ENCODE measurements at regions of chr3 and their contacts with region 1.

Region 1: DNA sequence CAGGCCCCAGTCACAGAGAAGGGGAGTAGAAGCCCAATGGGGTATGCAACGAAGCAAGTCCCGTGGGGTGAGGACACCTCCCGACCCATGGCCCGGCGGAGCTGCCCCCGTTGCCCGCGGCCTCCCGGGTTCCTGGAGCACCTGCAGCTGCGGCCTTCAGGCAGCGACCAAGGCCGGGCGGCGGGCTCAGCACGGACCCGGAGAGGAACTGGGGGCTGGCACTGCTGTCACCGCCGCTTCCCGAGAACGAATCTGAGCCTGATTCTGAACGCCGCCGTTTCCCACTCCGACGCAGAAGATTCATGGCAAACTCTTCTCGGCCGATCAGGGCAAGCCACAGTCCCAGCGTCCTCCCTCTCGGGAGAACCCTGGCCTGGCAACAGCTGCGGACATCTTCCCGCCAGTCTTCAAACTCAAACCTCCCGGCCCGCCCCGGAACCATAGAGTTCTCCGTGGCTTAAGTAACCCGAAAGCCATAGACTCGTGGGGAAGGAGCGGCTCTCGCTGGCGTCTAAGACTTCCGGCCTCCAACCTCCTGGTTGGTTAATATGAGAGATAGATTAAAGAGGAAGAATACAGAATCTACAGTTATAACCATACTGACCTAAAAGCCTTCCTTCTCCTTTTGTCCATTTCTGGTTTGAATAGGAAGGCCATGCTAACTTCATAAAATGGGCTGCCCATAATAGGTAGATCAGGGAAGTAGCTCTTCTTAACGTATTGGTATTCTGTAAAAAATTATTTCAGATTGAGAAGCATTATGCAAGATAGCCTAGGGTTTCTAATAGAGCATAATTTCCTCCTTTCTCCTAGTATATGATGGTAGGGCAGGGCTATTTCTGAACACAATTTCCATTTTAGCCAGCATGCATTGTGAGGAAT is at the start of gene POLQ:
- DNase-seq: peak; percentile 64 to 89 (median 82)
- ATAC-seq: peak; percentile 99
- H3K4me3 ChIP-seq: peak within 1 kb of the TSS; percentile 81
- H3K4me3 Mint-ChIP-seq: peak within 1 kb of the TSS; percentile 87 to 95 (median 92)
- H3K27ac ChIP-seq: peak within 1 kb of the TSS; percentile 70
- H3K27ac Mint-ChIP-seq: peak within 1 kb of the TSS; percentile 84 to 97 (median 94)
- H3K4me1 ChIP-seq: peaks cover 0 to 5% of the 10 kb centered on the region in 2 donors
- H3K4me1 Mint-ChIP-seq: peaks cover 6 to 38% (median 10%) of the 10 kb centered on the region in 7 donors
- H3K27me3 ChIP-seq: no peaks in the 10 kb centered on the region
- H3K27me3 Mint-ChIP-seq: no peaks in the 10 kb centered on the region
- total RNA-seq, gene POLQ: 0.17 to 26.6 (median 0.38) TPM

Region 2: DNA sequence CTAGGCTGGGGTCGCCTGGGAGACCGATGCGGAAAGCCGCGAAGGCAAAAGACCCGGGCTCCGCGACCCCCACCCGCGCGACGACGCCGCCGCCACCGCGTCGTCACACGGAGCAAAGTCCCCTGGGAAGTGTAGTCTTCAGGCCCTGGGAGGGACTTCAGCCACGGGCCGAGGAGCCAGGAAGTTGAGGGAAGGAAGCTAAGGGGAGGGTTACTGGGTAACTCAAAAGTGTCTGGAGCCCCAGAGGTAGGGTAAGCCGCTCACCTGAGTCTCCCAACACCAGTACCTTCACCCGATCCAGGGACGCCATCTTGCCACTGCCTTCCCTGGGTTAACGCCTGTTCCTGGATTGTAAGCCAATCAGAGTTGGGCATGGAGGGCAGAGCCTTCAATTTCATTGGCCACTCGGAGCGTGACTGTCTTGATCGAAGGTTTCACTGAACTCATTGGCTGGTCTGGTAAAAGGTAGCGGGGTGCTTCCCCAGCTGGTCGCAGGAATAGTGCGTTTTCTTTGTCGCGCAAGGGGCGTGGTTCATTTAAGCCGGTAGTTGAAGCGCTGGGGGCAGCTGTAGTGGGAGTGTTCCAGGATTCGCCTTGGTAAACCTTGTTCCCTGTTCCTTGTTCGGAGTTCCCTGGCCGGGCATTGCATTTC is 803.5 kb before region 1 on chr3 and contains the starts of genes GTF2E1 and RABL3:
- CTCF ChIA-PET with region 1: no interaction called
- POLR2A ChIA-PET with region 1: no interaction called
- intact Hi-C with region 1: loop called (anchors 1 to 2 kb)
- DNase-seq: peak; percentile 86 to 98 (median 97)
- ATAC-seq: peak; percentile 97
- H3K4me3 ChIP-seq: peak within 1 kb of the TSS; percentile 81
- H3K4me3 Mint-ChIP-seq: peak within 1 kb of the TSS; percentile 84 to 97 (median 92)
- H3K27ac ChIP-seq: peak within 1 kb of the TSS; percentile 98
- H3K27ac Mint-ChIP-seq: peak within 1 kb of the TSS; percentile 93 to 99 (median 97)
- H3K4me1 ChIP-seq: peaks cover 16 to 23% of the 10 kb centered on the region in 2 donors
- H3K4me1 Mint-ChIP-seq: peaks cover 26 to 55% (median 47%) of the 10 kb centered on the region in 7 donors
- H3K27me3 ChIP-seq: no peaks in the 10 kb centered on the region
- H3K27me3 Mint-ChIP-seq: no peaks in the 10 kb centered on the region
- total RNA-seq, gene GTF2E1: 8.4 to 27.3 (median 25.3) TPM
- total RNA-seq, gene RABL3: 15.4 to 30.3 (median 23.0) TPM

Region 3: DNA sequence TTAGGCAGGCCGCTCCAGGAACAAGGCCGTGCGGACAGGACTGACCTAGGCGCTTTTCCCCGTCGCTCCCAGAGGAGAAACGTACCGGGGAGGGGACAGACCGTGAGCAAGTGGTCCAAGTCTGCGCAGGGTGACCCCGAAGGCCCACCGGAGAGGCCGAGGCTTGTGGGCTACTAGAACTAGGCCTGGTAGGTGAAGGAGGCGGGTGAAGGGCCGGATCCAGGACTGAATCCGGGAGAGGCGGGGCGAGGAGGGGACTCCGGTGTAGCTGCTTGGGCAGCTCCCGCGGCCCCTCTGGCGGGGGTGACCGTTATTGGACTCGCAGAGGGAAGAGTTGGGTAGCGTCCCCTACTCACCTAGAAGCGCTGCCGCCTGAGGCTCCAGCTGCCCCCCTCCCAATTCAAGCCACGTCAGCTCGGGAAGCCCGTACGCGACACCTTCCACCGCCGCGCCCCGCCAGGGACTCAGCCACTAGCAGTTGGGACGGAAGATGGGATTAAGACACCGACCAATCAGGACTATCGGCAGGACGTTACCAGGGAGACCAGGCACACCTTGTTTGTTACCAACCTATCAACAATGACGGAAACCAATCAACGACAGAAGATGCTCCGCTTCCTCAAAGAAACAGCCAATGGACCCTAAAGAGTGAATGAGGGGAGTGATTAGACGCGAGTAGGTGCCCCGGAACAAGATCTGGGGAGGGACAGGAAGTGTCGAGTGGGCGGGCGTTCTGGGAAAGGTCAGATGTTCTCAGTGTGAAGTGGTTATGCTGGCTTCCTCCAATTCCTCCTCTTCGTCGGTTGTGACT is 203.7 kb after region 1 on chr3 and contains the start of gene GOLGB1:
- CTCF ChIA-PET with region 1: interaction called, 3 read pairs
- POLR2A ChIA-PET with region 1: interaction called, 3 read pairs
- intact Hi-C with region 1: loop called (anchors 1 kb)
- DNase-seq: peak; percentile 79 to 98 (median 96)
- ATAC-seq: peak; percentile 96
- H3K4me3 ChIP-seq: peak within 1 kb of the TSS; percentile 78
- H3K4me3 Mint-ChIP-seq: peak within 1 kb of the TSS in 3 of 10 donors; percentile 5 to 58 (median 39)
- H3K27ac ChIP-seq: peak within 1 kb of the TSS; percentile 96
- H3K27ac Mint-ChIP-seq: peak within 1 kb of the TSS in 2 of 9 donors; percentile 19 to 36
- H3K4me1 ChIP-seq: peaks cover 4 to 11% of the 10 kb centered on the region in 2 donors
- H3K4me1 Mint-ChIP-seq: peaks cover 5 to 18% (median 10%) of the 10 kb centered on the region in 7 donors
- H3K27me3 ChIP-seq: no peaks in the 10 kb centered on the region
- H3K27me3 Mint-ChIP-seq: peaks cover 0 to 24% (median 14%) of the 10 kb centered on the region in 5 donors
- total RNA-seq, gene GOLGB1: 29.5 to 49.7 (median 44.5) TPM

Region 4: GRCh38 chr3:121768452-121768851 is 222.6 kb after region 1 on chr3:
- CTCF ChIA-PET with region 1: no interaction called
- POLR2A ChIA-PET with region 1: no interaction called
- intact Hi-C with region 1: no loop called
- DNase-seq: no peak
- ATAC-seq: no peak
- H3K4me3 ChIP-seq: no peak overlapping the region
- H3K4me3 Mint-ChIP-seq: no peak overlapping the region
- H3K27ac ChIP-seq: no peak overlapping the region
- H3K27ac Mint-ChIP-seq: peak overlapping the region in 1 of 9 donors; percentile 48
- H3K4me1 ChIP-seq: no peaks in the 10 kb centered on the region
- H3K4me1 Mint-ChIP-seq: peaks cover 0 to under 1% (median 0%) of the 10 kb centered on the region in 7 donors
- H3K27me3 ChIP-seq: no peaks in the 10 kb centered on the region
- H3K27me3 Mint-ChIP-seq: peaks cover 0 to 3% (median 0%) of the 10 kb centered on the region in 5 donors

Region 5: DNA sequence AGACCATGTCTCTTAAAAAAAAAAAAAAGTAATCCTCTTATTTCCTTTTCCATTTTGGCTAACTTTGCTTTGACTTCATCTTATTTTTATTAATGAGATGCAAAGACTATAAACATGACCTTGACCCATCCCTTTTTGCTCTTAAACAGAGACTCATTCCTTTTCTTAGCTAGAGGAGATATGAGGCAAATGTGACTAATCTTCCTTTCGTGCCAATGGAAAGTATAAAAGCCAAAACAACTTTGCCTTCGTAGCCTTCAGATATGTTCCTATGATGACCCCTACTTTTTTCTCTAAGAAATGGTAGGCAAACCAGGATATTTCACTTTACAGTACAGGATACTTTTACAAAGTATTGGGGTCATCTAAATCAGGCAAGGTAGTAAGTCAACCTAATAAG is 240.7 kb after region 1 on chr3:
- CTCF ChIA-PET with region 1: no interaction called
- POLR2A ChIA-PET with region 1: no interaction called
- intact Hi-C with region 1: no loop called
- DNase-seq: no peak
- ATAC-seq: no peak
- H3K4me3 ChIP-seq: no peak overlapping the region
- H3K4me3 Mint-ChIP-seq: no peak overlapping the region
- H3K27ac ChIP-seq: no peak overlapping the region
- H3K27ac Mint-ChIP-seq: no peak overlapping the region
- H3K4me1 ChIP-seq: no peaks in the 10 kb centered on the region
- H3K4me1 Mint-ChIP-seq: peaks cover 0 to 5% (median 0%) of the 10 kb centered on the region in 7 donors
- H3K27me3 ChIP-seq: no peaks in the 10 kb centered on the region
- H3K27me3 Mint-ChIP-seq: no peaks in the 10 kb centered on the region

Region 6: GRCh38 chr3:121822973-121823372 is 277.2 kb after region 1 on chr3:
- CTCF ChIA-PET with region 1: no interaction called
- POLR2A ChIA-PET with region 1: no interaction called
- intact Hi-C with region 1: no loop called
- DNase-seq: no peak
- ATAC-seq: no peak
- H3K4me3 ChIP-seq: no peak overlapping the region
- H3K4me3 Mint-ChIP-seq: peak overlapping the region in 1 of 10 donors; percentile 12
- H3K27ac ChIP-seq: no peak overlapping the region
- H3K27ac Mint-ChIP-seq: peak overlapping the region in 1 of 9 donors; percentile 7
- H3K4me1 ChIP-seq: no peaks in the 10 kb centered on the region
- H3K4me1 Mint-ChIP-seq: peaks cover 16 to 51% (median 37%) of the 10 kb centered on the region in 7 donors
- H3K27me3 ChIP-seq: no peaks in the 10 kb centered on the region
- H3K27me3 Mint-ChIP-seq: no peaks in the 10 kb centered on the region

Region 7: GRCh38 chr3:122092460-122093165 is 546.8 kb after region 1 on chr3:
- CTCF ChIA-PET with region 1: interaction called, 3 read pairs
- POLR2A ChIA-PET with region 1: no interaction called
- intact Hi-C with region 1: loop called in 1 of 2 experiments (anchors 2 kb)
- DNase-seq: peak in 1 of 9 donors; percentile 51
- ATAC-seq: peak; percentile 84
- H3K4me3 ChIP-seq: no peak overlapping the region
- H3K4me3 Mint-ChIP-seq: peak overlapping the region in 1 of 10 donors; percentile 51
- H3K27ac ChIP-seq: no peak overlapping the region
- H3K27ac Mint-ChIP-seq: peak overlapping the region in 1 of 9 donors; percentile 87
- H3K4me1 ChIP-seq: no peaks in the 10 kb centered on the region
- H3K4me1 Mint-ChIP-seq: peaks cover 0 to 31% (median 0%) of the 10 kb centered on the region in 7 donors
- H3K27me3 ChIP-seq: no peaks in the 10 kb centered on the region
- H3K27me3 Mint-ChIP-seq: peaks cover 0 to 4% (median 0%) of the 10 kb centered on the region in 5 donors

Region 8: DNA sequence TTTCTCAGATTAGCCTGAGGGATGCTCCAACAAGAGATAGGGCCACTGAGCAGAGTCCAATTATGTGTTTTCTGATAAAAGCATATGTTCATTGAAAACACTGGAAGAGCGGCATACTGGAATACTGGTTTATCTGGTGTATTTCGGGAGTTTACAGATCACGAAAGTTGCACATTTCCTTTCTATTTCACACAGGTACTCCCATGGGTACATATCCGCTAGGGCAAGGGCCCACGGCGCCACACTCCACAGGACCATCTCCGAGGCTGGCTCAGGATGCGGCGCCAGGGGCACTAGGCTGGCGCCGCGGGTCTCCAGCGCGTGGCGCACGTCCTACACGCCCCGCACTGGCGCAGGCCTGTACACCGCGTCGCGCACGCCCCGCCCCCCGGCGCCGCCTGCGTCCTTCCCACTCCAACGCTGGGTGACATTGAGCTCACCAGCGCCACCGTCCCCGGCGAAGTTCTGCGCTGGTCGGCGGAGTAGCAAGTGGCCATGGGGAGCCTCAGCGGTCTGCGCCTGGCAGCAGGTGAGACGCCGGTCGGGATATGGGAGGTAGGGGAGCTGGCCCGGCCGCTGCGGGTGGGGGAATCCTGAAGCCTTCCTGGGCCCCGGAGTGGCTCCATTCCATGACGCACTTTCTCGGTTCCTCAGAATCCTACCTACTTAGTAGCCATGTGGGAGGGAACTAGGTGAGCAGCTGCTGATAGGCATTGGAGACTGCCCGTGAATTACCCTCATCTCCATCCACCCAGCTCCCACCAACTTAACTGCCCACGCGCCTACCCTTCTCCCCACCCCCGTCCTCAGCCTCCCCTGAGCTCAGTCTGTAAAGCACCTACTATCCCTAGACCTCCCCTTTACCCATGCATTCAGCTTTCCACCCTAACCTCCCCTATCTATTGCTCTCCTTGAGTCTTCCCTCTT is 838.2 kb after region 1 on chr3 and contains the start of gene FAM162A:
- CTCF ChIA-PET with region 1: interaction called, 3 read pairs
- POLR2A ChIA-PET with region 1: interaction called, 4 read pairs
- intact Hi-C with region 1: loop called (anchors 1 kb)
- DNase-seq: peak; percentile 90 to 94 (median 92)
- ATAC-seq: peak; percentile 98
- H3K4me3 ChIP-seq: peak within 1 kb of the TSS; percentile 84
- H3K4me3 Mint-ChIP-seq: peak within 1 kb of the TSS; percentile 87 to 99 (median 95)
- H3K27ac ChIP-seq: peak within 1 kb of the TSS; percentile 85
- H3K27ac Mint-ChIP-seq: peak within 1 kb of the TSS; percentile 88 to 98 (median 95)
- H3K4me1 ChIP-seq: peaks cover 12 to 15% of the 10 kb centered on the region in 2 donors
- H3K4me1 Mint-ChIP-seq: peaks cover 18 to 69% (median 55%) of the 10 kb centered on the region in 7 donors
- H3K27me3 ChIP-seq: no peaks in the 10 kb centered on the region
- H3K27me3 Mint-ChIP-seq: no peaks in the 10 kb centered on the region
- total RNA-seq, gene FAM162A: 17.6 to 73.2 (median 35.5) TPM

Region 9: GRCh38 chr3:122679085-122679881 is 1133.5 kb after region 1 on chr3:
- CTCF ChIA-PET with region 1: no interaction called
- POLR2A ChIA-PET with region 1: no interaction called
- intact Hi-C with region 1: loop called (anchors 1 kb)
- DNase-seq: peak; percentile 49 to 84 (median 79)
- ATAC-seq: peak; percentile 82
- H3K4me3 ChIP-seq: peak overlapping the region; percentile 87
- H3K4me3 Mint-ChIP-seq: peak overlapping the region; percentile 87 to 99 (median 94)
- H3K27ac ChIP-seq: peak overlapping the region; percentile 98
- H3K27ac Mint-ChIP-seq: peak overlapping the region; percentile 93 to 100 (median 98)
- H3K4me1 ChIP-seq: peaks cover 27 to 33% of the 10 kb centered on the region in 2 donors
- H3K4me1 Mint-ChIP-seq: peaks cover 40 to 57% (median 54%) of the 10 kb centered on the region in 7 donors
- H3K27me3 ChIP-seq: no peaks in the 10 kb centered on the region
- H3K27me3 Mint-ChIP-seq: no peaks in the 10 kb centered on the region

Region 10: DNA sequence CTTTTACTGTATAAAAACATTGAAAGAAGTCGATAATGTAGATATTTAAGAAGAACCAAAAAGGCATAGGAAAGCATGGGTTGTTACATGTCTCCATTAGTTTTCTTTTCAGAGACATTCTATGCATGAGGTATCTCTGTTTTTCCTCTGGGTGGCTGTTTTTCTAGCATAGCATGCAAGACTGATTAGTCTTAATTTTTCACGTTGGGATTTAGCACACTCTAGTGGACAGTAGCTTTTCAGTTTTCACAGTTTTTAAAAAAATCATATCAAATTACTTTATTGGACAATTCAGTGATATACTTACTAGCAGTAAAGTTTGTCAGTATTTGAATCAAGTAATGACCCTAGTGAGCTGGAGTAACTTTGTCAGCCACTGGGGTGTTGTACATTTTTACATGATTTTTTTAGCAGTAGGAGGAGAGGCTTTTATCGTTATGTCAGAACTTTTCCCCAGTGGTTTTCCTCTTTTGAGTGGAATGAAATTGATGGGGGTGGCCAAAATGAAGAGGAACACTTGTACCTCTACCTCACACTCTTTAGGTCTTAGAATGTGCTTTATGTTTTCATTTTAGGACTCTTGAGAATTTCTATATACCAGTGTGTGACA is 1713.1 kb after region 1 on chr3:
- CTCF ChIA-PET with region 1: no interaction called
- POLR2A ChIA-PET with region 1: no interaction called
- intact Hi-C with region 1: loop called in 1 of 2 experiments (anchors 1 kb)
- DNase-seq: peak in 5 of 9 donors; percentile 13 to 32 (median 21)
- ATAC-seq: peak; percentile 78
- H3K4me3 ChIP-seq: no peak overlapping the region
- H3K4me3 Mint-ChIP-seq: no peak overlapping the region
- H3K27ac ChIP-seq: no peak overlapping the region
- H3K27ac Mint-ChIP-seq: peak overlapping the region in 1 of 9 donors; percentile 74
- H3K4me1 ChIP-seq: no peaks in the 10 kb centered on the region
- H3K4me1 Mint-ChIP-seq: peaks cover 0 to 11% (median 0%) of the 10 kb centered on the region in 7 donors
- H3K27me3 ChIP-seq: no peaks in the 10 kb centered on the region
- H3K27me3 Mint-ChIP-seq: no peaks in the 10 kb centered on the region